Heart left ventricle (tissue), 16 donors: ENCODE measurements at regions of chr17 and their contacts with region 1.

Region 1: DNA sequence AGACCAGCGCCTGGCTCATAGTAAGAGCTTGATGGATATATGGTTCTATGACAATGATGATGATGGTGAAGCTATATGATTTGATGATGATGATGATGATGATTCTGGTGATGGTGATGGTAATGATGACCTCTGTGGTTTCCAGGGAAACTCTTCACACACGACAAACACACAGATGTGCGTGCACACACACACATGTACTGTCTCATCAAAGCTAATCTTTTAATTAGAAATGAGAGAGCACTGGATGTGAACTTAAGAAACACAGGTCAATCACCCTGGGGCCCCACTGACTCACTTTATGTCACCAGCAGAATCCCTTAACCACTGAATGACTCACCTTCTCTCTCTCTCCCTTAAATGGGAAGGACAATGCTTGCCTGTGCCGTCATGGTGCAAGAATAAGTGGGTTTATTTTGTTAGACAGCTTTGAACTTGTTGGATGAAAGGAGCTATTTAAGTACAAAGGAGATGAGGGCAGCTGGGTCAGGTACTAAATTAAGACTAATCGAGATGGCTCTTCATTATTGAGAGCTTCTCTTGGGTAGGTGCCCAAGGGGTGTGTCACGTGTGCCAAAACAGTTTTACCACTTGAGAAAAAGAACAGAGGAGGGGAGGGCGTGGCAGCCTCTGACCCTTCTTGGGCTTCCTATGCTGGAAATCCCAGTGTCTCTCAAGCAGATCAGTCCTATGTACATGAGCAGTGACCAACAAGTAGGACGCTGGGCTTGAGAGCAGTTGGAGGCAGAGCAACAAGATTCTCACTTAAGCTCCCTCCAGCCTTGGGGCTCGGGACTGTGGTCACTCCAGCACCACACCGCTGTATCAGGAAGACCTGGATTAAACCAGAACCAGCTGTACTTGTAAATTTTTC is 6.6 kb upstream of the KRT31 start:
- DNase-seq: peak in 1 of 5 donors; percentile 22
- ATAC-seq: peak in 3 of 4 donors; percentile 67 to 85 (median 80)
- H3K4me3 ChIP-seq: no peak overlapping the region
- H3K27ac ChIP-seq: no peak overlapping the region
- H3K4me1 ChIP-seq: peaks cover 0 to 9% (median 0%) of the 10 kb centered on the region in 12 donors
- H3K27me3 ChIP-seq: no peaks in the 10 kb centered on the region
- CTCF ChIP-seq: no peak
- POLR2A ChIP-seq: no peak

Region 2: DNA sequence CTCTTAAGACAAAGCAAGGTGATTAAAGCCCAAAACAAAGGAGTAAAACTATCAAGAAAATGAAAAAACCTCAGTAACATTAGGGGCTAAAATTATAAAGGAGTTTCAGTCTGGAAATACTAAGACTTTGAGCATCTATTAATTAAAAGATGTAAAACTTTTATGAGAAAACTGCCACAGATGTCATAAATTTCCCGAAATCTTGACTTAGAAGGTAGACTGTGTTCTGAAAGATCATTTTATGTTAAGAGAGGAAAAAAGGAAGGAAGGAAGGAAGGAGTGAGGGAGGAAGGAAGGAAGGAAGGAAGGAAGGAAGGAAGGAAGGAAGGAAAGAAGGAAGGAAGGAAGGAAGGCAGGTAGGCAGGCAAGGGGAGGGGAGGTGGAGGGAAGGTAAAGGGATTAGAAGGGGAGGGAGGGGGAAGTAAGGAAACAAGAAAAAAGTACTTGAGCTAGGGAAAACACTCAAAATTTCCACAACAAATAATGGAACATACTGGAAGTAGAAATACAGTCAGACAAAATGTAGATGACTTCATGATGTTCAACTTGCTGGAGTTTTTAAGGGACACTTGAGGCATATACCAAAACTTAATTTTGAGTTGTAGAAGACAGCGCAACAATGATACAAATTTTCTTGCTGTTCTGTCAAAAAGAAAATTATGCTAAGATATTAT is 256.4 kb before region 1 on chr17:
- intact Hi-C with region 1: no loop called
- DNase-seq: no peak
- ATAC-seq: no peak
- H3K4me3 ChIP-seq: no peak overlapping the region
- H3K27ac ChIP-seq: no peak overlapping the region
- H3K4me1 ChIP-seq: no peaks in the 10 kb centered on the region
- H3K27me3 ChIP-seq: peaks cover 0 to 17% (median 0%) of the 10 kb centered on the region in 9 donors
- CTCF ChIP-seq: no peak
- POLR2A ChIP-seq: no peak

Region 3: DNA sequence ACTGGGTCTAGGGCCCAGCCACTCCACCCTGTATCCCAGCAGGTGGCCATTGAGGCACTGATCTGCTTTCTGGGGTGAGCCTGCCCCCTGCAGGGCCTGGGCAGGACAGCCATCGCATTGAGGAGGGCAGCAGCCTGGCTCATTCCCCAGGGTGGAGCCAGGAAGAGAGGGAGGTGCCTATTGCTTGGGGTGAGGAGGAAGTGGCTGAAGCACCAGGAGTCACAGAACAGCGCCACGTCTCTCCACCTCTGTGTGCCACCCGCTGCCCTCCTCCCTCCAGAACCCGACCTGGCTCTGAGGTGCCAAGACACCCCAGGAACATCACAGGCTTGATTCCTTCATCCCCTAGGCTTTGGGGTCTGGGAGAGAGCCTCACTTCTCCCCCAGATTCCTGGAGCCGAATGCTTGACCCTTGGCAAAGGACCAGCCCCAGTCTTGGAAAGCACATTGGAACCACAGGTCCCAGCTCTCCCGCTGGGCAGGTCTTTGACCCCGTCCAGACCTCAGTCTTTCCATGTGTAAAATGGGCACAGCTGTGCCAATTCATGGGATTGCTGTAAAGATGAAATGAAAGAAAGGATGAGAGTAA is 92.9 kb after region 1 on chr17:
- intact Hi-C with region 1: loop called in 1 of 10 experiments (anchors 10 kb)
- DNase-seq: peak; percentile 52 to 79 (median 68)
- ATAC-seq: peak; percentile 69 to 87 (median 86)
- H3K4me3 ChIP-seq: no peak overlapping the region
- H3K27ac ChIP-seq: peak overlapping the region in 1 of 12 donors; percentile 71
- H3K4me1 ChIP-seq: peaks cover 0 to 41% (median 0%) of the 10 kb centered on the region in 12 donors
- H3K27me3 ChIP-seq: peaks cover 0 to 7% (median 0%) of the 10 kb centered on the region in 9 donors
- CTCF ChIP-seq: peak; percentile 19 to 66 (median 52)
- POLR2A ChIP-seq: no peak